ENCODE measurements at regions of chr7 and their contacts with region 1.

Region 1: GRCh38 chr7:122219253-122219865 is 75.3 kb upstream of the AASS start:
- DNase-seq: peak in 1 of 2 experiments; percentile 35
- H3K4me3 ChIP-seq: no peak overlapping the region
- H3K4me3 Mint-ChIP-seq: no peak overlapping the region
- H3K27ac Mint-ChIP-seq: no peak overlapping the region
- H3K4me1 ChIP-seq: no peaks in the 10 kb centered on the region
- H3K4me1 Mint-ChIP-seq: no peaks in the 10 kb centered on the region
- H3K27me3 ChIP-seq: no peaks in the 10 kb centered on the region
- H3K27me3 Mint-ChIP-seq: no peaks in the 10 kb centered on the region
- CTCF ChIP-seq: peak; percentile 61 to 65

Region 2: GRCh38 chr7:122014697-122015096 is 204.7 kb before region 1 on chr7:
- CTCF ChIA-PET with region 1: no interaction called
- POLR2A ChIA-PET with region 1: no interaction called
- intact Hi-C with region 1: loop called (anchors 10 kb)
- DNase-seq: no peak
- H3K4me3 ChIP-seq: no peak overlapping the region
- H3K4me3 Mint-ChIP-seq: no peak overlapping the region
- H3K27ac Mint-ChIP-seq: no peak overlapping the region
- H3K4me1 ChIP-seq: no peaks in the 10 kb centered on the region
- H3K4me1 Mint-ChIP-seq: no peaks in the 10 kb centered on the region
- H3K27me3 ChIP-seq: no peaks in the 10 kb centered on the region; the same call in 1 of the 2 replicates
- H3K27me3 Mint-ChIP-seq: peaks cover 5% of the 10 kb centered on the region
- CTCF ChIP-seq: peak in 1 of 2 experiments; percentile 15

Region 3: DNA sequence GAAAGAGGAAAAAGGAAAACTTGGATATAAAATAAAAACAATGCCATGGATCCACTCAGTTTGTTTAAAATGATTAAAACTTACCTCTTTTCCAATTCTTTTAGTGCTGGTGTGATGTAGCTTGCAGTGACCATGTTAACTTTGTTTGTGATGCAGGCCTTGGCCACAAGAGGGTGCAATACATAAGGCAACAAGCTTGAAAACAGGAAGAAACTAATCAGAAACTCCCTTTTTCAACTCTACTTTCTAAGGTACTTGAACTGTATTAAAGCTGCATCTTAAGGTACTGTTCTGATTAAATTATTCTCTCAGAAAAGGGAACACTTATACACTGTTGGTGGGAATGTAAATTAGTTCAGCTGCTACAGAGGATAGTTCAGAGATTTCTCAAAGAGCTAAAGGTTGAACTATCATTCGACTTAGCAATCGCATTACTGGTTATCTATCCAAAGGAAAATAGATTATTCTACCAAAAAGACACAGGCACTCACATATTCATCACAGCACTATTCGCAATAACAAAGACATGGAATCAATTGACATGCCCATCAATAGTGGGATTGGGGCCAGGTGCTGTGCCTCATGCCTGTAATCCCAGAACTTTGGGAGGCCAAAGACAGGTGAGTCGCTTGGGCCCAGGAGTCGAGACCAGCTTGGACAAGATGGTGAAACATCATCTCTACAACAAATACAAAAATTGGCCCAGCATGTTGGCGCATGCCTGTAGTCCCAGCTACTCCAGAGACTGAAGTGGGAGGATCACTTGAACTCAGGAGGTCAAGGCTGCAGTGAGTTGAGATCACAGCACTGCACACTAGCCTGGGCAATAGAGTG is 126.2 kb before region 1 on chr7:
- CTCF ChIA-PET with region 1: no interaction called
- POLR2A ChIA-PET with region 1: no interaction called
- intact Hi-C with region 1: loop called (anchors 2 kb)
- DNase-seq: peak; percentile 73 to 75
- H3K4me3 ChIP-seq: no peak overlapping the region
- H3K4me3 Mint-ChIP-seq: no peak overlapping the region
- H3K27ac Mint-ChIP-seq: no peak overlapping the region
- H3K4me1 ChIP-seq: no peaks in the 10 kb centered on the region
- H3K4me1 Mint-ChIP-seq: no peaks in the 10 kb centered on the region
- H3K27me3 ChIP-seq: no peaks in the 10 kb centered on the region
- H3K27me3 Mint-ChIP-seq: no peaks in the 10 kb centered on the region
- CTCF ChIP-seq: peak; percentile 81 to 91

Region 4: DNA sequence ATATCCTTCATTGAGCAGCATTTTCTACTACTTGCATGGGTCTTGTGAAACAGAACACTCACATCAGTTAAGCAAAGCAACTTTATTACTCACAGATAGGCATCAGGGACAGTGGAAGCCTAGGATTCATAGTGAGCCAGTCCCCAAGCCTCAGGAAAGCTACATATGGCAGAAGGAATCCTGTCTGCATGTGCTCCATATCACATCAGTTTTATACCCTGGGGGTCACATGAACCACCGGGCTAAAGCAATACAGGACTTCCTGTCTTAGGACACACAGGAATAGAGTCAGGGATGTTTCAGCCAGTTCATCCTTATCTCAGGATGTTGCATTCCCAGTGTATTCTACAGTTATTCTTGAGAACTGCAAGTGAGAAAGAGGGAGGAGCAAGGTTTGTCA is 70.1 kb after region 1 on chr7:
- CTCF ChIA-PET with region 1: no interaction called
- POLR2A ChIA-PET with region 1: no interaction called
- intact Hi-C with region 1: loop called (anchors 1 kb)
- DNase-seq: no peak
- H3K4me3 ChIP-seq: no peak overlapping the region
- H3K4me3 Mint-ChIP-seq: no peak overlapping the region
- H3K27ac Mint-ChIP-seq: no peak overlapping the region
- H3K4me1 ChIP-seq: peaks cover 9% of the 10 kb centered on the region; the same call in 1 of the 2 replicates
- H3K4me1 Mint-ChIP-seq: no peaks in the 10 kb centered on the region
- H3K27me3 ChIP-seq: no peaks in the 10 kb centered on the region
- H3K27me3 Mint-ChIP-seq: peaks cover 6% of the 10 kb centered on the region
- CTCF ChIP-seq: no peak

Region 5: GRCh38 chr7:122416316-122416715 is 197.0 kb after region 1 on chr7:
- CTCF ChIA-PET with region 1: no interaction called
- POLR2A ChIA-PET with region 1: no interaction called
- intact Hi-C with region 1: loop called (anchors 1 kb)
- DNase-seq: no peak
- H3K4me3 ChIP-seq: no peak overlapping the region
- H3K4me3 Mint-ChIP-seq: no peak overlapping the region
- H3K27ac Mint-ChIP-seq: no peak overlapping the region
- H3K4me1 ChIP-seq: no peaks in the 10 kb centered on the region
- H3K4me1 Mint-ChIP-seq: no peaks in the 10 kb centered on the region
- H3K27me3 ChIP-seq: no peaks in the 10 kb centered on the region
- H3K27me3 Mint-ChIP-seq: no peaks in the 10 kb centered on the region
- CTCF ChIP-seq: no peak

Region 6: DNA sequence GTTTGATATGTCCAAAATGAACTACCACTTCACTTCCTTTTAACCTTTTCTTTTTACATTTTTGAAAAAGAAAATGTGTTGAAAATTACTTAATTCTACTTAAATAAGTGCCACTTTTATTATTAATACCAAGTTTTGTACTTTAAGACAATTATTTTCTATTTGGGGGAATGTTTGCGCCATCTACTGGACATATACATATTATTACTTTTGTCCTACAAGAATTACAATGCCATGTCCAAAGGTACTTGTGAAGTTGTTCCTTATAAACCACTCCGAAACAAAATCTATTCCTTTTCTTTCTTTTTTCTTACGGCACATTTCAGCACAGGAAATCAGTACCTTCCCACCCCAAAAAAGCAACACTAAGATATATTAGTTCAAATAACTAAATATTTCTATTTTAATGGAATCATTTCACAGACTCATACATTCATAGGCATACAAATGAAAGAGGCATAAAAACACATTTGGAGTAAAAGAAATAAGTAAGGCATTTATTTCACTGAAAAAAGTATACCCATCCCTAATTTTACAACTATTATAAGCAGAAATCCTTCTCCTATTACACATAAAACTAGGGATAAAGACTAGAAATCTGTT is 309.6 kb after region 1 on chr7:
- CTCF ChIA-PET with region 1: no interaction called
- POLR2A ChIA-PET with region 1: no interaction called
- intact Hi-C with region 1: loop called (anchors 1 kb)
- DNase-seq: peak in 1 of 2 experiments; percentile 6
- H3K4me3 ChIP-seq: no peak overlapping the region
- H3K4me3 Mint-ChIP-seq: no peak overlapping the region
- H3K27ac Mint-ChIP-seq: no peak overlapping the region
- H3K4me1 ChIP-seq: no peaks in the 10 kb centered on the region
- H3K4me1 Mint-ChIP-seq: no peaks in the 10 kb centered on the region
- H3K27me3 ChIP-seq: no peaks in the 10 kb centered on the region
- H3K27me3 Mint-ChIP-seq: peaks cover 2% of the 10 kb centered on the region
- CTCF ChIP-seq: peak; percentile 52